T-cell (primary cell): ENCODE measurements at regions of chr9 and their contacts with region 1.

Region 1: DNA sequence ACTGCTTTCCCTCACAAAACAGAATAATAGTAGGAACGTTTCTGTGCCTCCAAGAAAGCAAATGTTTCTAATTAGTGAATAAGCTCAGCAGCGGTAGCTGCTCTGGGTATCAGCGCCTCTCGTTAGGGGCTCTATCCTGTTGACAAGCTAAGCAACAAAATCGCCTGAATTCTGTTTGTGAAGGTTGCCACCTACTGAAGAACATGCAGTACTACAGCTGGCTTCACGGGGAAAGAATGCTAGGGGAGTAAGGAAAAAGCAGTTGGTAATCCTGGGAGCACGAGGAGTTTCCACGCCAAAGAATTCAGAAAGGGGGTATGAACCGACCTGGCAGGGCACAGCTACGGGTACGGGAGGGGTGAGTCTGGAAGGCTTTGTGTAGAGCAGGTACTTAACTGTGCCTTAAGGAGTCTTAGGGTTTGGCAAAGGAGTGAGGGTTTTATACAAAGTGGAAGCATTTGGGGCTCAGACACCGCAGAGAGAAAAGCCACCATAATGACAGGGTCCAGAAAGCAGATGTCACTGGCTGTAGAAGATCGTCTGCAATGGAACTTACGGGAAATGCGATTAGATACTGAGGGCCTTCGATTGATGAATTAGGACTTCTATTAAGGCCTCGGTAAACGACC is 171.7 kb downstream of the TTC39B start:
- DNase-seq: peak in 33 of 35 experiments; percentile 4 to 67 (median 23)
- ATAC-seq: peak; percentile 82 to 86 (median 85)
- H3K4me3 ChIP-seq: no peak overlapping the region
- H3K4me3 Mint-ChIP-seq: no peak overlapping the region
- H3K27ac ChIP-seq: no peak overlapping the region
- H3K27ac Mint-ChIP-seq: no peak overlapping the region
- H3K4me1 ChIP-seq: no peaks in the 10 kb centered on the region
- H3K4me1 Mint-ChIP-seq: peaks cover 4 to 10% (median 6%) of the 10 kb centered on the region in 3 donors
- H3K27me3 ChIP-seq: peaks cover 0 to 4% of the 10 kb centered on the region in 2 experiments
- H3K27me3 Mint-ChIP-seq: no peaks in the 10 kb centered on the region

Region 2: GRCh38 chr9:14640967-14641366 is 494.3 kb before region 1 on chr9:
- CTCF ChIA-PET with region 1: no interaction called
- POLR2A ChIA-PET with region 1: no interaction called
- DNase-seq: no peak
- ATAC-seq: no peak
- H3K4me3 ChIP-seq: no peak overlapping the region
- H3K4me3 Mint-ChIP-seq: no peak overlapping the region
- H3K27ac ChIP-seq: no peak overlapping the region
- H3K27ac Mint-ChIP-seq: no peak overlapping the region
- H3K4me1 ChIP-seq: no peaks in the 10 kb centered on the region
- H3K4me1 Mint-ChIP-seq: peaks cover 0 to 4% (median 2%) of the 10 kb centered on the region in 3 donors
- H3K27me3 ChIP-seq: no peaks in the 10 kb centered on the region
- H3K27me3 Mint-ChIP-seq: no peaks in the 10 kb centered on the region

Region 3: DNA sequence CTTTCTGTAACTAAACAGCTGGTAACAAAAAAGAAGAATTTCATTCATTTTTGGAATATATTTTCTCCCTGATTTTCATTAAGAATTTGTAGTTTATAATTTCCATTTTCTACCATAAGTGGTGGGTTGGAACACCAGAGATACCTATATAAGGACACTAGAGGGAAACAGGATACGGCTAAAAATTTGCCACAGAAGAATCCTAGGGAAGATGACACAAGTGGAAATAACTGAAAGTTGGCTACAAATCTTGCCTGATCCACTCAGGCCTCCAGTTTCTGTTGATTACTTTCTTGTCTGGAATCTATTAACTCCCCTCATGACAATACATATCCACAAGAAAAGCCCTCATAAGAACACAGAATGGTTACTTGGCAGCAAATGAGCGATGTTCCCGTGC is 271.9 kb before region 1 on chr9:
- CTCF ChIA-PET with region 1: no interaction called
- POLR2A ChIA-PET with region 1: no interaction called
- DNase-seq: no peak
- ATAC-seq: no peak
- H3K4me3 ChIP-seq: no peak overlapping the region
- H3K4me3 Mint-ChIP-seq: no peak overlapping the region
- H3K27ac ChIP-seq: no peak overlapping the region
- H3K27ac Mint-ChIP-seq: no peak overlapping the region
- H3K4me1 ChIP-seq: no peaks in the 10 kb centered on the region
- H3K4me1 Mint-ChIP-seq: no peaks in the 10 kb centered on the region
- H3K27me3 ChIP-seq: no peaks in the 10 kb centered on the region
- H3K27me3 Mint-ChIP-seq: no peaks in the 10 kb centered on the region

Region 4: DNA sequence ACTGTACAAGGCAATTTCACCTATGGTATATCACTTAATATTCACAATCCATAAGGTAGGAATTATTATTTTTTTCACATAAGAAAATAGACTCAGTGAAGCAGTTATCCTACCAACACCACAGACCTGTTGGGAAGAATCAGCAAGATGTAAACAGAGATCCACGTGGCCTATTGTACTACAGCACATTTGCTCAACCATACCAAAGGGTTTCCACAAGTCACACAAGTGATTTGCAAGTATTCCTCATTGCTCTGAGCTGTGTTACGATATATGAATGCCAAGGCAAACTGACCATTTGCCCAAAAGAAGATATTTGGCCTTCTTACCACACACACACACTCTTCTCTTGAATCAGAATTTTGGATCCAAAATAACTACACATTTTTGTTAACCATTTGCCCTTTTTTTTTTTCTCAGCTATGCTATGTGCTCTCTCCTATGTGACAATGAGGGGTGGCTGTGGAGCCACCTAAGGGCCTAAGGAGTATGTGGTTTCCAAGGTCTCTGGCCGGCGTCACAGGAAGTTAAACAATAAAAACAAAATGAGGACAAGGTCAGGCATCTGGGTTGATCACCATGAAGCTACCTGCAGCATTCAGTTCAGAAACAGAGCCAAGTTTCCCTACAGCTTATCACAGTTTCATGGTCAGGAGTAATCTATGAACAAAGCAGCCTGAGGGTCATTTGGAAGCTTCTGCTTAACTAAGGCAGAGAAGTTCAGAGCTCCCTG is 54.1 kb before region 1 on chr9:
- CTCF ChIA-PET with region 1: no interaction called
- POLR2A ChIA-PET with region 1: interaction called in 1 of 2 experiments, 10 read pairs
- DNase-seq: no peak
- ATAC-seq: no peak
- H3K4me3 ChIP-seq: no peak overlapping the region
- H3K4me3 Mint-ChIP-seq: no peak overlapping the region
- H3K27ac ChIP-seq: no peak overlapping the region
- H3K27ac Mint-ChIP-seq: no peak overlapping the region
- H3K4me1 ChIP-seq: no peaks in the 10 kb centered on the region
- H3K4me1 Mint-ChIP-seq: no peaks in the 10 kb centered on the region
- H3K27me3 ChIP-seq: no peaks in the 10 kb centered on the region
- H3K27me3 Mint-ChIP-seq: peaks cover 0 to 4% of the 10 kb centered on the region in 2 donors

Region 5: DNA sequence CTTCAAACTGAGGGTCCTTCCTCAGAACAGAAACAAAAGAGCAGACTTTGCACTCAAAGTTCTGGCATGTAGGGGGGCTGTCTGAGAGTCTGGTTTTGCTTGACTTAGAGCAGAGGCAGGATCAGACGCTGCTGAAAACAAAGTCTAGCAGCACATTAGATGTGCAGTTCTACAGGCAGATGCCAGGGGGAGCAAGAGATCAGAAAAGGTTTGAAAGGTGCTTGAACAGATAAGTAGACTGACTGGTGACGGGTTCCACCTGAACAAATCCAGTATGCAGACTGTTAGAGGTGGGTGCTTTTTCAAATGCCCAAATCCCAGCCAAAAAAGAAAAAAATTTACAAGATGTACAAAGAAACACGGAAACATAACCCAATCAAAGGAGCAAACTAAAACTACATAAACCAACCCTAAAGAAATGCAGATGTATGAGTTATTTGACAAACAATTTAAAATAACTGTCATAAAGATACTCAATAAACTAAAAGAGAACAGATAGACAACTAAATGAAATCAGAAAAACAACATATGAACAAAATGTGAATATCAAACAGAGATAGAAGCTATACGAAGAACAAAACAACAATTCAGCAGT is 30.4 kb before region 1 on chr9:
- CTCF ChIA-PET with region 1: interaction called, 26 to 39 read pairs
- POLR2A ChIA-PET with region 1: interaction called in 1 of 2 experiments, 5 read pairs
- DNase-seq: peak in 32 of 35 experiments; percentile 1 to 65 (median 16)
- ATAC-seq: peak; percentile 69 to 71 (median 70)
- H3K4me3 ChIP-seq: no peak overlapping the region
- H3K4me3 Mint-ChIP-seq: no peak overlapping the region
- H3K27ac ChIP-seq: no peak overlapping the region
- H3K27ac Mint-ChIP-seq: no peak overlapping the region
- H3K4me1 ChIP-seq: peaks cover 0 to 5% of the 10 kb centered on the region in 2 experiments
- H3K4me1 Mint-ChIP-seq: peaks cover 0 to 2% (median 0%) of the 10 kb centered on the region in 3 donors
- H3K27me3 ChIP-seq: no peaks in the 10 kb centered on the region
- H3K27me3 Mint-ChIP-seq: peaks cover 5 to 7% of the 10 kb centered on the region in 2 donors

Region 6: DNA sequence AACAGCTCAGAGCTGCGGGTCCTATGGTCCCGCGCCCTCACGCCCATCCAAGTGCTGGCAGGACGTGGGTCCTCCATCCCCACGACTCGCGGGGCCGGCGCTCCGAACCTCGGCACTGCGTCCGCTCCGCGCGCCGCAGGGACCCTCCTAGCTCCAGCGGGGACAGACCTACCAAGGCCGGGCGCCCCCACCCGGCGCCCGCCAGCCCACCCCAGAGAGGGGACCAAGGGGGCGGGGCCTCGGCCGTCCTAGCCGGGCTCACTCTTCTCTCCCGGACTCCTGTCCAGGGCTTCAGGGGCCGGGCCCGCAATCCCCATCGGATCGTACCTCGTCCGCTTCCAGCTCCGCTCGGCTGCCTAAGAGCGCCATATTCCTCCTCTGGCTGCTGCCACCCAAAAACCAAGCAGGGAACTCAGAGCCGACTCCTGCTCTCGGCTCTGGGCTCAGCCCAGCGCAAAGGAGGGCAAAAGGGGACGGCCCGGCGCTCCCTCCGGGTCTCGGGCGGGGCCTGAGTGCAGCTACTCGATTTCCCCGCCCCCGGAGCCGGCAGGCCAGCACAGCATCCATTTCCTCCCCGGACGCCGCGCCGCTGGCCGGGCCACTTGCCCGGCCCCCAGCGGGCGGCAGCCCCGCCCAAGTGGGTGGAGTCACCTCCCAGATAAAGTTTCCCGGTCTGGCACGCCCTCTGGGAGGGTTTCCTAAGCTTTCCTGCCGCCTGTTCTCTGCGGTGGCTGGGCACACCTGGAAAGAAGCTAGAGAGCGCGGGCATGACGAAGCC is 171.7 kb after region 1 on chr9 and contains the start of gene TTC39B:
- CTCF ChIA-PET with region 1: no interaction called
- POLR2A ChIA-PET with region 1: no interaction called
- DNase-seq: peak; percentile 22 to 82 (median 61)
- ATAC-seq: peak; percentile 68 to 76 (median 74)
- H3K4me3 ChIP-seq: peak within 1 kb of the TSS; percentile 80 to 94
- H3K4me3 Mint-ChIP-seq: peak within 1 kb of the TSS; percentile 96 to 99 (median 97)
- H3K27ac ChIP-seq: peak within 1 kb of the TSS; percentile 87
- H3K27ac Mint-ChIP-seq: peak within 1 kb of the TSS; percentile 97
- H3K4me1 ChIP-seq: peaks cover 22 to 34% of the 10 kb centered on the region in 2 experiments
- H3K4me1 Mint-ChIP-seq: peaks cover 57 to 63% (median 60%) of the 10 kb centered on the region in 3 donors
- H3K27me3 ChIP-seq: no peaks in the 10 kb centered on the region
- H3K27me3 Mint-ChIP-seq: no peaks in the 10 kb centered on the region
- total RNA-seq, gene TTC39B: 32.4 to 54.6 (median 35.6) TPM